Natural killer cell (primary cell): ENCODE measurements at regions of chr18 and their contacts with region 1.

Region 1: DNA sequence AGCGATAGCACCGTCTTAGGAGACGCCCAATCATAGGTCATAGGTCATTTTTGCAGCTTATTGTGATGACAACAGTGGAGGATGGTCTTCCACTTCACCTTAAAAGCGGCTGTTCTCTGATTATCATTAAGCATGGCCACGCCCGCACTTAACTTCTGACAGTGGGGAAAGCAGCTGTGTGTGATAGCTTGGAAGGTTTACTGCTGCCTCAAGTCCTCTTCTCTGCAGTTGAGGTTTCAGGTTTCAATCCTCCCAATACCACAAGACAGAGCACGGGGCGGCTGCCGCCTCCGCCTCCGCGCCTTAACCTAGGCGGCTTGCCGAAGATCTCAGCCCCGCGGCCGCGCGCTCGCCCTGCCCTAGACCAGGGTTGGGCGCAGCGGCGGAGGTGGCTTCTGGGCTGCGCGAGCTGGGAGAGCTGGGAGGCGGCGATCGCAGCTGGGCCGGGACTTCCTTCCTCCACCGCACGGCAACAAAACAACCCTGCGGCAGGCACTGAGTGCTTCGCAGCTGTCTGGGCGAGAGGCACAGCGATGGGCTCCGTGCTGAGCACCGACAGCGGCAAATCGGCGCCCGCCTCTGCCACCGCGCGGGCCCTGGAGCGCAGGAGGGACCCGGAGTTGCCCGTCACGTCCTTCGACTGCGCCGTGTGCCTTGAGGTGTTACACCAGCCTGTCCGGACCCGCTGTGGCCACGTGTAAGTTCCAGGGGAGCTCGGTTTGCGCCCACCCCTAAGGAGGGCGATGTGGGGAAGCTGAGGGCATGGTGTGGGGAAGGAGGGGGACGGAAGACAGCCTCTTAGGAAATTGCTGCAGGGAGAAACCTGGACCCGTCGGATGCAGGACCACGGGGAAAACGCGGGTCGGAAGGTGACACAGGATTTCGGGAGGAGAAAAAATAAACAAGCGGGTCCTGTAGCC is at the start of gene RNF125:
- DNase-seq: peak; percentile 82 to 96
- ATAC-seq: peak; percentile 64 to 85 (median 77)
- H3K4me3 ChIP-seq: peak within 1 kb of the TSS; percentile 98
- H3K4me3 Mint-ChIP-seq: peak within 1 kb of the TSS; percentile 91
- H3K27ac ChIP-seq: peak within 1 kb of the TSS; percentile 93
- H3K27ac Mint-ChIP-seq: peak within 1 kb of the TSS; percentile 91 to 97
- H3K4me1 ChIP-seq: peaks cover 34% of the 10 kb centered on the region
- H3K4me1 Mint-ChIP-seq: peaks cover 52 to 61% of the 10 kb centered on the region in 2 donors
- H3K27me3 ChIP-seq: no peaks in the 10 kb centered on the region
- H3K27me3 Mint-ChIP-seq: no peaks in the 10 kb centered on the region
- CTCF ChIP-seq: no peak
- total RNA-seq, gene RNF125: 74.7 to 105 (median 96.7) TPM

Region 2: DNA sequence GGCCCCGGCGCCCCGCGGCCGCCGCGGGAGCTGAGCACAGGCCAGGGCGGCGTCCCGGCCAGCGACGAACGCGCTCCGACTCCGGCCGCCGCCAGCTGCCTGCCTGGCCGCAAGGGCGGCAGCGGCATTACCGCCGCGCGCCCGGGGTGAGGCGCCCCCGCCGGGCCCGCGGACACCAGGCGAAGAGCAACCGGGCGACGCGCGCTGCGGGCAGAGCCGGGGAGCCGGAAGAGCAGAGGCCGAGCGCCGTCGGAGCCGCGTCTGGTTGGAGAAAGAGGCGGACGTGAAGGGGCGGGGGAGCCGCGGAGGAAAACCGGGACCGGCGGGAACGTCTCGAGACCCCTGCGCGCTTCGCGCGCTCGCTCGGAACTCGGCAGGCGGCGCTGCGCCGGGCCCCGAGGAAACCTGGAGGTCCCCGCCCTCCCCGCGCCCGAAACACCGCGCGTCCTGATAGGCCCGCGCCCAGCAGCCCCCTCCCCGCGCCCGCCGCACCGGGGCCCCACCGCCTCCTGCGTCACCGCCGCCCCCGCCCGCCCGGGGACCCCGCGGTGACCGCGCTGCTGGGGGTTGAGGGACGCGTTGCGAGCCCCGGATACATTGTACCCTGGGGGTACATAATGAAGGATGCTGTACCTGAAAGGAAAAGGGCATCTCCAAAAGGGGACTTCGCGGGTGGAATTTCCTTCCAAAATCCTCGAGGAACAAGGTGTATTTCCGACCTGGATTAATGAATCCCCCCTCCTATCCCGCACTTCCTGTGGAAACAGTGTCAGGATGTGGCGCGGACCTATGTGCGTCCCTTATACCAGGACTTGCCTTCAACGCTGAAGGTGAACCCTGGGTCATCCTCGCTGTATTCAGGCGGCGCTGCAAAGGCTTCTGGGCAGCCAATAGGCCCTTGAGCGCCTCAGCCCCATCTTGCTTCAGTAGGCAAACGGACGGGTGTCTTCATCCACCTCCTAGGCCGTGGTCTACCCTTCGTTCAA is 333.2 kb before region 1 on chr18:
- intact Hi-C with region 1: loop called (anchors 10 kb)
- DNase-seq: peak; percentile 71 to 77
- ATAC-seq: peak; percentile 73 to 83 (median 79)
- H3K4me3 ChIP-seq: peak overlapping the region; percentile 70
- H3K4me3 Mint-ChIP-seq: peak overlapping the region; percentile 85
- H3K27ac ChIP-seq: peak overlapping the region; percentile 96
- H3K27ac Mint-ChIP-seq: peak overlapping the region; percentile 86 to 90
- H3K4me1 ChIP-seq: peaks cover 15% of the 10 kb centered on the region
- H3K4me1 Mint-ChIP-seq: peaks cover 38 to 45% of the 10 kb centered on the region in 2 donors
- H3K27me3 ChIP-seq: no peaks in the 10 kb centered on the region
- H3K27me3 Mint-ChIP-seq: peaks cover 0 to 2% of the 10 kb centered on the region in 2 donors
- CTCF ChIP-seq: peak; percentile 37

Region 3: DNA sequence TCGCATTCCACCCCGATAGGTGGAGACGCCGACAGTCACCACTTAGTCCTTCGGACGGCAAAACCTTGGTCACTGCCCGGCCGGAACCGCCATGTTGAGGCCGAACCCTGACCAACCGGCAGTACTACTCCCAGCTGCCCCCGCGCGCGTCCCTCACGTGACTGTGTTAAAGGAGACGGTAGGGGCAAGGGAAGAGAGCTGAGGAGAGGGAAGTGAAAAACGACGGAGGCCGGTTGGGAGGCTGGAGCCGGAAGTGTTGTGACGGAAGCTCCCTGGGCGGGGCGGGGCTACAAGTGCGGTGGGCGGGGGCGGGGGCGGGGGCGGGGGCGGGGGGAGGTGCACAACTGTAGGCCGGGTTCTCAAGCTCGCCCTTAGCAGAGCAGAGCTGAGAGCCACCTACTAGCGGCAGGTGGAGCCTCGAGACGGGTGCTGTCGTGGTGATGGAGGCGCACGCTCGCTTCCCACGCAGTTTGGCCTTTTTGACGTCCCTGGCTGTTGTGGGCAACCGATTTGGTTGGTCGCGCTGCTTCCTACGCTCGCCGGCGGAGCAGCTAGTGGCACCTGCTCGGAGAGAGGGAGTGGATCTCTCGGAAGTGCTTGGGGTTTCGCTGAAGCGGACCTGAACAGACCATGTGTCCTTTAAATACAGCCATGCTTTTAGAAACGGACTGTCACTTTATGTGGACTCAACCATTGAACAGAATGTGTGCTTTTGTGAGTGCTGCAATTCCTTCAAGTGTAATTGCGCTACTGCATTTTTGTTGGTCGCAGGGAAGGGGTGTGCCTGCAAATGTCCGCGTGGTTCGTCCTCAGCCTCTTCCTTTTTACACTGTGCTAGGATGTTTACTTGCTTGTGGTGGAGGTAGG is 75.4 kb before region 1 on chr18 and contains the start of gene TRAPPC8:
- intact Hi-C with region 1: loop called (anchors 1 kb)
- DNase-seq: peak; percentile 85 to 96
- ATAC-seq: peak; percentile 82 to 93 (median 83)
- H3K4me3 ChIP-seq: peak within 1 kb of the TSS; percentile 96
- H3K4me3 Mint-ChIP-seq: peak within 1 kb of the TSS; percentile 99
- H3K27ac ChIP-seq: peak within 1 kb of the TSS; percentile 98
- H3K27ac Mint-ChIP-seq: peak within 1 kb of the TSS; percentile 95 to 99
- H3K4me1 ChIP-seq: peaks cover 13% of the 10 kb centered on the region
- H3K4me1 Mint-ChIP-seq: peaks cover 45 to 48% of the 10 kb centered on the region in 2 donors
- H3K27me3 ChIP-seq: no peaks in the 10 kb centered on the region
- H3K27me3 Mint-ChIP-seq: peaks cover 0 to 2% of the 10 kb centered on the region in 2 donors
- CTCF ChIP-seq: no peak
- total RNA-seq, gene TRAPPC8: 38.5 to 51.2 (median 41.4) TPM

Region 4: GRCh38 chr18:32029558-32029957 is 11.0 kb after region 1 on chr18:
- intact Hi-C with region 1: no loop called
- DNase-seq: no peak
- ATAC-seq: peak in 1 of 3 donors; percentile 49
- H3K4me3 ChIP-seq: no peak overlapping the region
- H3K4me3 Mint-ChIP-seq: peak overlapping the region; percentile 62
- H3K27ac ChIP-seq: no peak overlapping the region
- H3K27ac Mint-ChIP-seq: peak overlapping the region; percentile 77 to 87
- H3K4me1 ChIP-seq: peaks cover 70% of the 10 kb centered on the region
- H3K4me1 Mint-ChIP-seq: peaks cover 85 to 91% of the 10 kb centered on the region in 2 donors
- H3K27me3 ChIP-seq: no peaks in the 10 kb centered on the region
- H3K27me3 Mint-ChIP-seq: no peaks in the 10 kb centered on the region
- CTCF ChIP-seq: no peak

Region 5: GRCh38 chr18:32040936-32041335 is 22.3 kb after region 1 on chr18:
- intact Hi-C with region 1: loop called (anchors 1 kb)
- DNase-seq: peak; percentile 41 to 82
- ATAC-seq: peak; percentile 86 to 93 (median 92)
- H3K4me3 ChIP-seq: peak overlapping the region; percentile 7
- H3K4me3 Mint-ChIP-seq: peak overlapping the region; percentile 65
- H3K27ac ChIP-seq: peak overlapping the region; percentile 69
- H3K27ac Mint-ChIP-seq: peak overlapping the region; percentile 82 to 83
- H3K4me1 ChIP-seq: peaks cover 63% of the 10 kb centered on the region
- H3K4me1 Mint-ChIP-seq: peaks cover 59 to 79% of the 10 kb centered on the region in 2 donors
- H3K27me3 ChIP-seq: no peaks in the 10 kb centered on the region
- H3K27me3 Mint-ChIP-seq: no peaks in the 10 kb centered on the region
- CTCF ChIP-seq: no peak

Region 6: GRCh38 chr18:32048507-32049091 is 30.0 kb after region 1 on chr18:
- intact Hi-C with region 1: loop called (anchors 1 kb)
- DNase-seq: peak in 1 of 2 donors; percentile 44
- ATAC-seq: peak; percentile 42 to 61 (median 53)
- H3K4me3 ChIP-seq: no peak overlapping the region
- H3K4me3 Mint-ChIP-seq: peak overlapping the region; percentile 75
- H3K27ac ChIP-seq: peak overlapping the region; percentile 87
- H3K27ac Mint-ChIP-seq: peak overlapping the region; percentile 83 to 91
- H3K4me1 ChIP-seq: peaks cover 48% of the 10 kb centered on the region
- H3K4me1 Mint-ChIP-seq: peaks cover 40 to 51% of the 10 kb centered on the region in 2 donors
- H3K27me3 ChIP-seq: no peaks in the 10 kb centered on the region
- H3K27me3 Mint-ChIP-seq: no peaks in the 10 kb centered on the region
- CTCF ChIP-seq: no peak

Region 7: GRCh38 chr18:32083781-32084180 is 65.2 kb after region 1 on chr18:
- intact Hi-C with region 1: loop called (anchors 2 kb)
- DNase-seq: no peak
- ATAC-seq: no peak
- H3K4me3 ChIP-seq: no peak overlapping the region
- H3K4me3 Mint-ChIP-seq: peak overlapping the region; percentile 14
- H3K27ac ChIP-seq: no peak overlapping the region
- H3K27ac Mint-ChIP-seq: peak overlapping the region; percentile 87 to 96
- H3K4me1 ChIP-seq: peaks cover 32% of the 10 kb centered on the region
- H3K4me1 Mint-ChIP-seq: peaks cover 33 to 44% of the 10 kb centered on the region in 2 donors
- H3K27me3 ChIP-seq: no peaks in the 10 kb centered on the region
- H3K27me3 Mint-ChIP-seq: peaks cover 0 to 3% of the 10 kb centered on the region in 2 donors
- CTCF ChIP-seq: no peak

Region 8: GRCh38 chr18:32092422-32093101 is 74.0 kb after region 1 on chr18:
- intact Hi-C with region 1: loop called (anchors 1 kb)
- DNase-seq: peak; percentile 98 to 99
- ATAC-seq: peak; percentile 87 to 97 (median 88)
- H3K4me3 ChIP-seq: peak overlapping the region; percentile 97
- H3K4me3 Mint-ChIP-seq: peak overlapping the region; percentile 100
- H3K27ac ChIP-seq: peak overlapping the region; percentile 99
- H3K27ac Mint-ChIP-seq: peak overlapping the region; percentile 95 to 96
- H3K4me1 ChIP-seq: peaks cover 13% of the 10 kb centered on the region
- H3K4me1 Mint-ChIP-seq: peaks cover 42 to 43% of the 10 kb centered on the region in 2 donors
- H3K27me3 ChIP-seq: no peaks in the 10 kb centered on the region
- H3K27me3 Mint-ChIP-seq: no peaks in the 10 kb centered on the region
- CTCF ChIP-seq: no peak